ENCODE measurements at regions of chr13 and their contacts with region 1.

Region 1: GRCh38 chr13:102555917-102556553 is 40.8 kb upstream of the TPP2 start:
- DNase-seq: no peak

Region 2: GRCh38 chr13:102141625-102142472 is 414.2 kb before region 1 on chr13:
- intact Hi-C with region 1: loop called (anchors 2 kb)
- DNase-seq: no peak

Region 3: GRCh38 chr13:102351521-102351920 is 204.5 kb before region 1 on chr13:
- intact Hi-C with region 1: no loop called
- DNase-seq: no peak

Measured in posterior cingulate gyrus (tissue), 11 donors.